MCF 10A (cell line): ENCODE measurements at regions of chr12 and their contacts with region 1.

Region 1: DNA sequence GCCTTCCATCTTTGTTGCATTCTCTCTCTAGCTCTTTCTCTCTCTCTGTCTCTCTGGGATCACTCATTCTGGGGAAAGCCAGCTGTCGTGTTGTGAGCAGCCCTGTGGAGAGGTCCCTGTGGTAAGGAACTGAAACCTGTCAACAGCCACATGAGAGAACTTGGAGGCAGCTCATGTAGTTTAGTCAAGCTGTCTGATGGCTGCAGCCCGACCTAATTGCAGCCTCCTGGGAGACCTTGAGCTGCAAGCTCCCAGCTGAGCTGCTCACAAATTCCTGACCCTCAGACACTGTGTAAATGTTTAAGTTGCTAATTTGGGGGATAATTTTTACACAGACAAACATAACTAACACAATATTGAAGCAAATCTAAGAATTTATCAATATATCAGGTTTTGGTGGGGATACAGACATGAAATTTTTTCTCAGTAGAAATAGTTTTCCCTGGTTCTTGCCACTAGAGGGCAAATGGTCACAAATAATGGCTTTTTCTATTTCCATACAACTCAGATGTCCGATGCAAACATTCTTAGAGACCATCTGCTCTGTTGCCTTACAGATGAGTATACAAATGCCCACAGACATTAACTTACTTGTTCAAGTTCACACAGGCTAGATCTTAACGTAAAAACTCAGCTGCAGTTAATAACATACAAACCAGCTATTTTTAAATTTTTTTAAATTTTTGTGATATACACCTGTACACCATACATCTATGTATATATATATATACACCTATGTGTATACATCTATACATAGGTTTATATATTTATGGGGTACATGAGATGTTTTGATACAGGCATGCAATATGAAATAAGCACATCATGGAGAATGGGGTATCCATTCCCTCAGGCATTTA is 15.5 kb upstream of the KRR1 start:
- DNase-seq: peak; percentile 59
- H3K4me3 Mint-ChIP-seq: no peak overlapping the region
- H3K27ac Mint-ChIP-seq: no peak overlapping the region
- H3K4me1 Mint-ChIP-seq: no peaks in the 10 kb centered on the region
- H3K27me3 Mint-ChIP-seq: no peaks in the 10 kb centered on the region
- CTCF ChIP-seq: peak; percentile 55

Region 2: DNA sequence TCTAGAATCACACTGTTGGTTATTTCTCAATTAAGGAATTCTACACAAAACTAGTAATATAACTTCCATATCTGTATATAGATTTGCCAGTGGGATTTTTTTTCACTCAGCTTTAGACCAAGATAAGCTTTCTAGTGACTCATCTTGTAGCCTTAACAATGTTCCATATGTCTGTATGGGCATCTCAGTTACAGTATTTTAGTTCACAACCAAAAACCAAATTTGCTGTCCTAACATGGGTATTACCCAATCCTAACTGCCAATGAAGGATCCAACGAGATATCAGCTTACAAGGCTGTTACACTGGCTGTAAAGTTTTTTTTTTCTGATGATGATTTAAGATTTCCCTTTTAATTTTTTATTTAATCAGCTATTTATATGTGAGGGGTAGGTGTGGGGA is 16.1 kb after region 1 on chr12:
- CTCF ChIA-PET with region 1: interaction called, 26 read pairs
- POLR2A ChIA-PET with region 1: no interaction called
- intact Hi-C with region 1: no loop called
- DNase-seq: peak; percentile 7
- H3K4me3 Mint-ChIP-seq: no peak overlapping the region
- H3K27ac Mint-ChIP-seq: no peak overlapping the region
- H3K4me1 Mint-ChIP-seq: no peaks in the 10 kb centered on the region
- H3K27me3 Mint-ChIP-seq: no peaks in the 10 kb centered on the region
- CTCF ChIP-seq: no peak

Region 3: GRCh38 chr12:75814851-75815754 is 288.2 kb after region 1 on chr12:
- CTCF ChIA-PET with region 1: interaction called, 11 read pairs
- POLR2A ChIA-PET with region 1: no interaction called
- intact Hi-C with region 1: loop called (anchors 5 kb)
- DNase-seq: peak; percentile 37
- H3K4me3 Mint-ChIP-seq: no peak overlapping the region
- H3K27ac Mint-ChIP-seq: peak overlapping the region; percentile 37
- H3K4me1 Mint-ChIP-seq: peaks cover 8% of the 10 kb centered on the region
- H3K27me3 Mint-ChIP-seq: no peaks in the 10 kb centered on the region
- CTCF ChIP-seq: no peak

Region 4: DNA sequence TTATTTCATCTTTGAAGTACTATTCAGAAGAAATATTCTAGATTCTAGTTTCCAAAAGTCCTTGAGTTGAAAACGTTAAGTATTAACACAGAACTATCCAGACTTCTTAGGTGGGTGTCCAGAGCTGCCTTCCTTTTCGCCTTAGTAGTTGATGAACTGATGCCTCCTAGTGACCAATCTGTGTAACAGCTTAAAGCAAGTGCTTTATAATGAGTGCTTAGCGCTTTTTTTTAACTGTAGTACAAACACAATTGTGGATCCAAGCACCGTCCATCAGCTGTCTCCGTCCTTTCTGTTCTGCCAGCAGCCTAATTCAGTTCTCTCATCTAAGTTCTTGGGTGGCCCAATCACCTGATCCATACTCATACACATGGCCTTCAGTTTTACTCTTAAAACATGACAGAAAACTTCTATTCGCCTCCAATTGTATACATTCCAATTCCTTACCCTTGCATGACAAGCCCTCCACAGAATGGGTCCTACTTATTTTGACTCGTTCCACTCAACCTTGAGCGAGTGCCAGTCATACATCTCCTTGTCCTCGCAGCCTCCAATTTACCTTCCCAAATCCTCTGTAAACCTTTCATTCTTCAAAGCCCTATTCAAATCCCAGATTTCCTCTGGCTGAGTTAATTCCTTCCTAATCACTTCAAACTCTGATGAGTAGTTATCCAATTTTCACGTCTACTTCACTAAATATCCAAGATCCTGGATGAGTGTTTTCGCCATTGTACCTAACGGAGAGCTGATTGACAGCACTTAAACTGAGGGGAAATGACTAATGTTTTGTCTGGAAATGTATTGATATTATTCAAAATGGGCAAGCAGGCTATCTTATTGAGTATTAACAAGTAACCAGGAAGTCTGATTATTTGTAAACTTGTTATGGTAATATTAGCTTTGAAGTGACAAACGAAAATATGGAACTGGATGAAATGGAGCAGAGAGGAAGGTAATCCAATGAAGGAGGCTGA is 510.5 kb after region 1 on chr12:
- CTCF ChIA-PET with region 1: interaction called, 117 read pairs
- POLR2A ChIA-PET with region 1: interaction called, 47 read pairs
- intact Hi-C with region 1: loop called (anchors 1 kb)
- DNase-seq: peak; percentile 80
- H3K4me3 Mint-ChIP-seq: no peak overlapping the region
- H3K27ac Mint-ChIP-seq: no peak overlapping the region
- H3K4me1 Mint-ChIP-seq: peaks cover 32% of the 10 kb centered on the region
- H3K27me3 Mint-ChIP-seq: no peaks in the 10 kb centered on the region
- CTCF ChIP-seq: peak; percentile 77

Region 5: DNA sequence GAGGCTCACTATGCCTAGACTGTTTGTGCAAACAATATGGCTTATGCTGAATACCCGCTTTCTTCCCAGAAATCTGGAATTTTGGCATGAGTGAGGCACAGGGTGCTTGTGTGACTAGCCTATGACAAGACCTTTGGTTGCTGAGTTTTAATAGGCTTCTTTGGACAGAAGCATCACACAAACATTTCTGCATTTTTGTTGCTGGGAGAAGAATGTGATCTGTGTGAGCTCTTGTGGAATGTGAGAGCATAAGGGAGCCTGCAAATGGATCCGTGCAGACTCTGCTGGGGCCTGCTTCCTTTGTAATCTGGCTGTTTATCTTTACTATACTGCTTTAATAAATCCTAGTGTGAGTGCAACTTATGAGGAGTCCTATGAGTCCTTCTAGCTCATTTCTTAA is 1154.1 kb after region 1 on chr12:
- CTCF ChIA-PET with region 1: no interaction called
- POLR2A ChIA-PET with region 1: no interaction called
- intact Hi-C with region 1: no loop called
- DNase-seq: no peak
- H3K4me3 Mint-ChIP-seq: no peak overlapping the region
- H3K27ac Mint-ChIP-seq: no peak overlapping the region
- H3K4me1 Mint-ChIP-seq: peaks cover 6% of the 10 kb centered on the region
- H3K27me3 Mint-ChIP-seq: no peaks in the 10 kb centered on the region
- CTCF ChIP-seq: no peak